SK-N-SH (cell line): ENCODE measurements at regions of chr21 and their contacts with region 1.

Region 1: GRCh38 chr21:45140346-45140940 is 66.1 kb downstream of the ADARB1 start:
- DNase-seq: peak; percentile 90
- H3K4me3 ChIP-seq: no peak overlapping the region; a peak in 1 of 4 replicates
- H3K27ac ChIP-seq: no peak overlapping the region
- H3K4me1 ChIP-seq: peaks cover 6 to 9% of the 10 kb centered on the region in 2 experiments; a peak in 3 of 4 replicates
- H3K27me3 ChIP-seq: no peaks in the 10 kb centered on the region
- CTCF ChIP-seq: peak; percentile 91
- EP300 ChIP-seq: no peak
- RAD21 ChIP-seq: peak; percentile 99

Region 2: DNA sequence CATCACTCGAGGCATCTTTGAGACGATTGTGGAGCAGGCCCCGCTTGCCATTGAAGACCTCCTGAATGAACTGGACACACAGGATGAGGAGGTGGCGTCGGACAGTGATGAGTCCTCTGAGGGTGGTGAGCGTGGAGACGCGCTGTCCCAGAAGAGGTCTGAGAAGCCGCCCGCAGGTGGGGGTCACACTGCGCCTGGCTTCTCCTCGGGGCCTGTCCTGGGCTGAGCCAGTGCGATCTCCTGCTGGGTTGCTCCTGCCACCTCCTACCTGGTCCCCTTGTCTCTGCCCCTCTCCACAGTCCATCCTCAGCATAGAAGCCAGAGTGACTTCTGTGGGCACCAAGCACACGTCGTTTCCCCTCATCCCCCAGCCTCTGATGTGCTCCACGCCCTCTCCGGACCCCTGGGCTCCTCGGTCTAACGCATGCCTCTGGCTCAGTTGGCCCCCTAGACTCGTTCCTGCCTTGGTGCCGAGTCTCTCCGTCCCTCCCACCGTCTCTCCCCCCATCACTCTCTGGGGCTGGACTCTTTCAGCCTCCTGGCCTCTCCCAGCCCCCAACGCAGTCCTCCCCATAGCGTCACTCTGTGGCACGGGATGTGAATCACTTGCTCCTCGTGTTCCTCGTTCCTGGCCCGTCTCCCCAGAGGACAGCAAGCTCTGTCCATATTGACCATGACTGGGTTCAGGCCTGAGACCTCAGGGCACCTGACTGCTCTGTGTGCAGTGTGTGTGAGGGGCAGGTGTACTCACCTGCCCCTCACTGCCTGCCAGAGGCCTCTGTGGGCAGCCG is 1342.3 kb before region 1 on chr21:
- CTCF ChIA-PET with region 1: no interaction called
- POLR2A ChIA-PET with region 1: no interaction called
- DNase-seq: no peak
- H3K4me3 ChIP-seq: no peak overlapping the region
- H3K27ac ChIP-seq: no peak overlapping the region
- H3K4me1 ChIP-seq: no peaks in the 10 kb centered on the region
- H3K27me3 ChIP-seq: no peaks in the 10 kb centered on the region
- CTCF ChIP-seq: no peak
- EP300 ChIP-seq: no peak
- RAD21 ChIP-seq: no peak

Region 3: DNA sequence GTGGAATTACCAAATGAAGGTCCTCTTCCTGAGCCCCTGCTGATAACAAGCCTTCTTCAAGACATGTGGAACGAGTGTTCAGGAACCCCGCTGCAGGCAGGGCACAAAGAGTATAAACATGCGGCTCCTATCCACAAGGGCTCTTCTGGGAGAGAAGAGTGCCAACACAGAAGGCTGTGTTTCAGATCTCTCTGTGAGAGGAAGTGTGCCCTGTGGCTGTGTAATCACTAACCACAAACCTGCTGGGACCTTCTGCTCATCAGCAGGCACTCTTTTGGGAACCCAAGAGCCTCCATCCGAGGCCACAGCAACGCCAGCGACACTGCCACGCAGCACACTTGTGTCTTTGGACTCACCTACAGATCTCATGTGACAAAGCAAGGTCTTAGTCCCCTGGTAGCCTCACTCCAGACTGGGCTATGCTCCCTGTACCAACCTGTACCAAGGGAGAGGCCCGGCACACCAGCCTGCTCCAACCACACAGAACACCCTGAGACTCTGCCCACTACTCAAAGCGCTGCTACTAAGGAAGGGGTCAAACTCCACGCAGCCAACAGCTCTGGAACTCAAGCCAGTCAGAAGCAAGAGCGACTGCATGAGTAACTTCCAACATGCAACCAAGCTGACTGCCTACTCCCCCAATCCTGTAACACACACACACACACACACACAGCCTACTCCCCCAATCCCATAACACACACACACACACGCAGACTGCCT is 274.7 kb before region 1 on chr21:
- CTCF ChIA-PET with region 1: no interaction called
- POLR2A ChIA-PET with region 1: no interaction called
- DNase-seq: no peak
- H3K4me3 ChIP-seq: no peak overlapping the region
- H3K27ac ChIP-seq: no peak overlapping the region
- H3K4me1 ChIP-seq: peaks cover 31 to 38% of the 10 kb centered on the region in 2 experiments
- H3K27me3 ChIP-seq: no peaks in the 10 kb centered on the region
- CTCF ChIP-seq: no peak
- EP300 ChIP-seq: no peak
- RAD21 ChIP-seq: no peak

Region 4: DNA sequence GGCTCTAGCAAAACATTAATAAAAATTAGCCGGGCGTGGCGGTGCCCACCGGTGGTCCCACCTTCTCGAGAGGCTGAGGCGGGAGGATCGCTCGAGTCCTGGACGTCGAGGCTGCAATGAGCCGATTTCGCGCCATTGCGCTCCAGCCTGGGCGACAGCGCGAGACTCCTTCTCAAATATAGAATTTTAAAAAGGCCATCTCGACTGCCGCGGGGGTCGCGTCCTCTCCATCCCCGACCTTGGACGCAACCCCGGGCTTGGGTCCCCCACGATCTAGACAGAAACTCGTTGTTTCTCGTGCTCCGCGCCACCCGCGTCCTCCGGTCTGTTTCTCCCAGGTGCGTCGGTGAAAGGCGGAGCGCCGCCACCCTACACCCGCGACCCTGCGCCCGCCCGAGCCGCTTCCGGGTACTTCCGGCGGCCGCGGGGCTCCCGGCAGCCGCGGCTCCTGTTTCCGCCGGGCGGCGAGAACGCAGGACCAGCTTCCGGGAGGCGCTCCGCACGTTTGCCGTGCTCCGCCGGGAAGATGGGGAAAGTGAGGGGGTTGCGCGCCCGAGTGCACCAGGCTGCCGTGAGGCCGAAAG is 200.8 kb before region 1 on chr21 and contains the start of gene SLX9:
- CTCF ChIA-PET with region 1: interaction called, 357 read pairs
- POLR2A ChIA-PET with region 1: interaction called, 3 read pairs
- DNase-seq: peak; percentile 98
- H3K4me3 ChIP-seq: peak within 1 kb of the TSS; percentile 97 to 98
- H3K27ac ChIP-seq: peak within 1 kb of the TSS; percentile 41 to 63; a peak in 3 of 4 replicates
- H3K4me1 ChIP-seq: peaks cover 8 to 19% of the 10 kb centered on the region in 2 experiments; a peak in 3 of 4 replicates
- H3K27me3 ChIP-seq: no peaks in the 10 kb centered on the region
- CTCF ChIP-seq: no peak
- EP300 ChIP-seq: peak in 1 of 2 experiments; percentile 34; a peak in 1 of 4 replicates
- RAD21 ChIP-seq: no peak
- polyA plus RNA-seq, gene SLX9: 27.1 and 42.9 TPM in 2 replicates

Region 5: GRCh38 chr21:45098867-45099266 is 41.6 kb before region 1 on chr21:
- CTCF ChIA-PET with region 1: interaction called, 41 read pairs
- POLR2A ChIA-PET with region 1: no interaction called
- DNase-seq: peak; percentile 54
- H3K4me3 ChIP-seq: no peak overlapping the region
- H3K27ac ChIP-seq: no peak overlapping the region
- H3K4me1 ChIP-seq: peaks cover 20 to 52% of the 10 kb centered on the region in 2 experiments; a peak in 3 of 4 replicates
- H3K27me3 ChIP-seq: no peaks in the 10 kb centered on the region
- CTCF ChIP-seq: peak; percentile 46
- EP300 ChIP-seq: no peak
- RAD21 ChIP-seq: peak; percentile 45

Region 6: DNA sequence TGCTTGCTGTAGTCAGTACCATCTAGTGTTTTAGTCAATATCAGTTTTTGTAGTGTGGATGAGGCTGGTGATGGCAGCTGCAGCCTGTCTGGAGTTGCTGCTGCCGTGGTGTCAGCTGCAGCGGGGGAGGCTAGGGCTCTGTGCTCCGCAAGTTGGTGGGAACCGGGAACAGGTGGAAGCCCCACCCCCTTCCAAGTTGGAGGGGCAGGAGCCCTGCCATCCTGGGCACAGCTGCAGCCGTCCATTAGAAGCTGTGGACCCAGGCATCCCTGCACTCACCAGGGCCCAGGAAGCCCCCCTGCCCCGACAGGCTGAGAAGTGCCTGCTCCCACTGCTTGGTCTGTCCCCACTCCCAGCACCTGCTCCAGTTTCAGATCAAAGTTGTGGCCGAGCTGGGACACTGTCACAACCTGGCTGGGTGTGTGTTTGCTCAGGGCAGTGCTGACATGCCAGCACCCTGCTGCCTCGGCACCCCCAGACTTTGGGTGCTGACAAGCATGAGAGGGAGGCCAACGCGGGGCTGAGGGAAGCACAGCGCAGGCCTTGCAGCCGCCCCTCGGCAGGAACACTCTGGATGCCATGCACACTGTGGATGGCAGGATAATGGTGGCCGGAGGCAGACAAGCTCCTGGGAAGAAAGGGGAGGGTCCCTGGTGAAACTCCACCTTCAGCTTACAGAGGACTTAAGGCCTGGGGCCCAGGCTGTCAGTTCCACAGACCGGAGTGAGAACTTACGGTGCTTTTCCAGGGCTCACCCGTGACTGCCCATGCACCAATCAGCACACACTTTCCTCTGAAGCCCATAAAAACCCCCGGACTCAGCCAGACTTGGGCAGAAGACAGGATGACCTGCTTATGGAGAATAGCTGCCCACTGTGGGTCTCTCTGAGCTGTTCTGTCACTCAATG is 20.8 kb after region 1 on chr21:
- CTCF ChIA-PET with region 1: interaction called, 28 read pairs
- POLR2A ChIA-PET with region 1: no interaction called
- DNase-seq: no peak
- H3K4me3 ChIP-seq: no peak overlapping the region
- H3K27ac ChIP-seq: peak overlapping the region in 1 of 2 experiments; percentile 100; a peak in 2 of 4 replicates
- H3K4me1 ChIP-seq: peaks cover 0 to 63% of the 10 kb centered on the region in 2 experiments; a peak in 2 of 4 replicates
- H3K27me3 ChIP-seq: no peaks in the 10 kb centered on the region
- CTCF ChIP-seq: no peak
- EP300 ChIP-seq: no peak
- RAD21 ChIP-seq: no peak

Region 7: DNA sequence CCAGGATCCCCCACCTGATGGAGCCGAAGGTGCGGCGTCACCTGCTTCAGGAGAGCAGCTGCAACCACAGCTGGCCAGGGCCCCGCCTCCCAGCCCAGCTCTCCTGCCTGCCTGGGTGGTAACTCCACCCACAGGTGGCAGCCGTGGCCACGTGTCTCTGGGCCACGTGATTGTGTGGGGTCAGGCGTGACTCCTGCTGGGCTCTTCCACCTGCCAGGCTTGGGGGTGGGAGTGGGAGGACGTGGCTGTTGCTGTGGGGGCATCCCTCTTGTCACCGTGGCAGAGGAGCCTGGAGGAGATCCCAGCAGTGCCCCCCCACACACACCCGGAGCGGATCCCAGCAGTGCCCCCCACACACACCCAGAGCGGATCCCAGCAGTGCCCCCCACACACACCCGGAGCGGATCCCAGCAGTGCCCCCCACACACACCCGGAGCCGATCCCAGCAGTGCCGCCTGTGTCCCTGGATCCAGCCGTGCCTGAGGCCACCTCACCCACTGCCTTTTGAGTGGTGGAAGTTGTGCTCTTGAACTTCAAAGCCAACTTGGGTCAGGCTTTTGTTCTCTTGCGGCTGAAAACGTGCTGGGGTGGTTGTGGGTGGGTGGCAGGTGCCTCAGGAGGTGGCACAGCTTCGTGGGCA is 115.1 kb after region 1 on chr21:
- CTCF ChIA-PET with region 1: interaction called, 19 read pairs
- POLR2A ChIA-PET with region 1: no interaction called
- DNase-seq: peak; percentile 25
- H3K4me3 ChIP-seq: no peak overlapping the region
- H3K27ac ChIP-seq: no peak overlapping the region
- H3K4me1 ChIP-seq: peaks cover 0 to 41% of the 10 kb centered on the region in 2 experiments; a peak in 1 of 4 replicates
- H3K27me3 ChIP-seq: no peaks in the 10 kb centered on the region
- CTCF ChIP-seq: no peak
- EP300 ChIP-seq: no peak
- RAD21 ChIP-seq: no peak

Region 8: GRCh38 chr21:45309069-45309986 is 168.9 kb after region 1 on chr21:
- CTCF ChIA-PET with region 1: interaction called, 33 read pairs
- POLR2A ChIA-PET with region 1: no interaction called
- DNase-seq: peak; percentile 82
- H3K4me3 ChIP-seq: no peak overlapping the region; a peak in 1 of 4 replicates
- H3K27ac ChIP-seq: peak overlapping the region; percentile 17 to 86; a peak in 2 of 4 replicates
- H3K4me1 ChIP-seq: peaks cover 3 to 16% of the 10 kb centered on the region in 2 experiments; a peak in 2 of 4 replicates
- H3K27me3 ChIP-seq: no peaks in the 10 kb centered on the region
- CTCF ChIP-seq: peak; percentile 87
- EP300 ChIP-seq: no peak
- RAD21 ChIP-seq: peak; percentile 58